ENCODE measurements at regions of chr16 and their contacts with region 1.

Region 1: GRCh38 chr16:14249291-14250032 is 178.3 kb downstream of the MRTFB start:
- DNase-seq: peak; percentile 43
- ATAC-seq: peak; percentile 70
- H3K4me3 ChIP-seq: no peak overlapping the region
- H3K27ac ChIP-seq: no peak overlapping the region
- H3K4me1 ChIP-seq: no peaks in the 10 kb centered on the region
- H3K27me3 ChIP-seq: no peaks in the 10 kb centered on the region
- CTCF ChIP-seq: peak; percentile 94
- POLR2A ChIP-seq: no peak
- RAD21 ChIP-seq: peak; percentile 89

Region 2: DNA sequence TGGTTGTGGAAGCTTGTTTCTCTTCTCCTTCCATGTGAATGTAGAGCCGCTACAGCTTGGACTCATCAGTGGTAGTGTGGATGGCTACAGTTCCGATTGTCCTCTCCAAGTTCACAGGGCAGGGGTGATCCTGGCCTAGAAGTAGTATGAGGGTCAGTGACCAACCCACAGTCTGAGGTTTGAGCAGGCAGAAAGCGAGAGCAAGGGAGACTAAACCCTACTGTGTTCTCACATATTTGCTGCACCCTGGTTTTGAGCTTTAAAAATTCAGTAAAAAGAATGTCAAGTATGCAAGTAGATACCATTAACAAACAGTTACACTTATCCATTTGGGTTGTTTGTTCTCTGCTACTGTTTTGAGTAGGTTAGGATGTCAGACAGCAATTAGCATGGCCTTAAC is 29.5 kb before region 1 on chr16:
- CTCF ChIA-PET with region 1: no interaction called
- POLR2A ChIA-PET with region 1: no interaction called
- dilution Hi-C with region 1: no loop called
- in situ Hi-C with region 1: no loop called
- intact Hi-C with region 1: no loop called
- DNase-seq: no peak
- ATAC-seq: peak; percentile 48
- H3K4me3 ChIP-seq: no peak overlapping the region
- H3K27ac ChIP-seq: no peak overlapping the region
- H3K4me1 ChIP-seq: peaks cover 2% of the 10 kb centered on the region; the same call in 1 of the 2 replicates
- H3K27me3 ChIP-seq: no peaks in the 10 kb centered on the region
- CTCF ChIP-seq: no peak
- POLR2A ChIP-seq: no peak
- RAD21 ChIP-seq: no peak

Region 3: GRCh38 chr16:14232106-14232864 is 17.2 kb before region 1 on chr16:
- CTCF ChIA-PET with region 1: no interaction called
- POLR2A ChIA-PET with region 1: no interaction called
- dilution Hi-C with region 1: no loop called
- in situ Hi-C with region 1: no loop called
- intact Hi-C with region 1: no loop called
- DNase-seq: peak; percentile 72
- ATAC-seq: peak; percentile 83
- H3K4me3 ChIP-seq: no peak overlapping the region
- H3K27ac ChIP-seq: no peak overlapping the region
- H3K4me1 ChIP-seq: peaks cover 8% of the 10 kb centered on the region
- H3K27me3 ChIP-seq: no peaks in the 10 kb centered on the region
- CTCF ChIP-seq: no peak
- POLR2A ChIP-seq: no peak
- RAD21 ChIP-seq: no peak

Region 4: DNA sequence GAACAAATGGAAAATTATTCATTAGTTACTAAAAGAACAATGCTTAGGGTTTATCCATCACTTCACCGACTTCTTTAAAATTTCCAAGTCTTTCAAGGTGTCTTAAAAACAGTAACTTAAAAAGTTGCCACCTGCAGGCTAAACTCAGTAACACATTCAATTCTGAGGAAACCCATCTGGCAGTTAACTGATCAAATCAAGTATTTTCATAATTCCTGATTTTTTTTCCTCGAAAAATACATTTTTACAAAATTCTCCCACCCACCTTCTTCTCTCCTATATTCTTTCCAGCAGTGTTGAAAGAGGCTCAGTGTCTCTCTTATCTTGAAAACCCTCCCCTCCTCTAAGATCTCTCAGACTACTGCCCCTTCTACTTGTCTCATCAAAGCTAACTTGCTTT is 350.7 kb after region 1 on chr16:
- CTCF ChIA-PET with region 1: interaction called, 3 read pairs
- POLR2A ChIA-PET with region 1: no interaction called
- dilution Hi-C with region 1: no loop called
- in situ Hi-C with region 1: no loop called
- intact Hi-C with region 1: loop called (anchors 5 kb)
- DNase-seq: peak; percentile 41
- ATAC-seq: no peak
- H3K4me3 ChIP-seq: no peak overlapping the region
- H3K27ac ChIP-seq: no peak overlapping the region
- H3K4me1 ChIP-seq: no peaks in the 10 kb centered on the region
- H3K27me3 ChIP-seq: no peaks in the 10 kb centered on the region
- CTCF ChIP-seq: peak; percentile 44
- POLR2A ChIP-seq: no peak
- RAD21 ChIP-seq: peak; percentile 36